PC-9 (cell line): ENCODE measurements at regions of chr1 and their contacts with region 1.

Region 1: GRCh38 chr1:31476891-31477828 is 64.1 kb downstream of the SERINC2 start:
- DNase-seq: peak; percentile 84 to 93
- H3K4me3 ChIP-seq: no peak overlapping the region
- H3K27ac ChIP-seq: peak overlapping the region; percentile 91
- H3K4me1 ChIP-seq: peaks cover 34% of the 10 kb centered on the region
- H3K27me3 ChIP-seq: no peaks in the 10 kb centered on the region
- CTCF ChIP-seq: no peak

Region 2: DNA sequence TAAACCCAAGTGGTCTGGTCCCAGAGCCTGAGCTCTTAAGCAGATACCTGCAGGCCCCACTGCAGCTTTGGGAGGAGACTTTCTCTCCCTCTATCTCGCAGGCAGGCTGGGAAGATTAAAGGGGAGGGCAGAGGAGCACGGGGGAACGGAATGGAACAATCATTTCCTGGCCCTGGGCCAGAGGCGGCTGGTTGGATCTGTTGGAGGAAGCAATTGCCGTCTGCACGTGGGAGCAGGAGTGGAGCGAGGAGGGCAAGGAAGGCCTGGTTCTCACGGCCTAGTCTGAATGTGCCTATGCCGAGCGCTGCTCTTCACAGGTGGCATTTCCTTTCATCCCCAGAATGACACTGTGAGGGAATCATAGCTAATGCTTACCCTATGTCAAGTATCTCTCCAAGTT is 261.1 kb before region 1 on chr1:
- CTCF ChIA-PET with region 1: no interaction called
- POLR2A ChIA-PET with region 1: no interaction called
- intact Hi-C with region 1: no loop called
- DNase-seq: no peak
- H3K4me3 ChIP-seq: no peak overlapping the region
- H3K27ac ChIP-seq: no peak overlapping the region
- H3K4me1 ChIP-seq: no peaks in the 10 kb centered on the region
- H3K27me3 ChIP-seq: no peaks in the 10 kb centered on the region
- CTCF ChIP-seq: no peak

Region 3: GRCh38 chr1:31509124-31510072 is 32.2 kb after region 1 on chr1:
- CTCF ChIA-PET with region 1: no interaction called
- POLR2A ChIA-PET with region 1: interaction called, 6 read pairs
- intact Hi-C with region 1: loop called (anchors 2 kb)
- DNase-seq: peak in 1 of 2 experiments; percentile 51
- H3K4me3 ChIP-seq: no peak overlapping the region
- H3K27ac ChIP-seq: no peak overlapping the region
- H3K4me1 ChIP-seq: peaks cover 34% of the 10 kb centered on the region
- H3K27me3 ChIP-seq: no peaks in the 10 kb centered on the region
- CTCF ChIP-seq: no peak

Region 4: DNA sequence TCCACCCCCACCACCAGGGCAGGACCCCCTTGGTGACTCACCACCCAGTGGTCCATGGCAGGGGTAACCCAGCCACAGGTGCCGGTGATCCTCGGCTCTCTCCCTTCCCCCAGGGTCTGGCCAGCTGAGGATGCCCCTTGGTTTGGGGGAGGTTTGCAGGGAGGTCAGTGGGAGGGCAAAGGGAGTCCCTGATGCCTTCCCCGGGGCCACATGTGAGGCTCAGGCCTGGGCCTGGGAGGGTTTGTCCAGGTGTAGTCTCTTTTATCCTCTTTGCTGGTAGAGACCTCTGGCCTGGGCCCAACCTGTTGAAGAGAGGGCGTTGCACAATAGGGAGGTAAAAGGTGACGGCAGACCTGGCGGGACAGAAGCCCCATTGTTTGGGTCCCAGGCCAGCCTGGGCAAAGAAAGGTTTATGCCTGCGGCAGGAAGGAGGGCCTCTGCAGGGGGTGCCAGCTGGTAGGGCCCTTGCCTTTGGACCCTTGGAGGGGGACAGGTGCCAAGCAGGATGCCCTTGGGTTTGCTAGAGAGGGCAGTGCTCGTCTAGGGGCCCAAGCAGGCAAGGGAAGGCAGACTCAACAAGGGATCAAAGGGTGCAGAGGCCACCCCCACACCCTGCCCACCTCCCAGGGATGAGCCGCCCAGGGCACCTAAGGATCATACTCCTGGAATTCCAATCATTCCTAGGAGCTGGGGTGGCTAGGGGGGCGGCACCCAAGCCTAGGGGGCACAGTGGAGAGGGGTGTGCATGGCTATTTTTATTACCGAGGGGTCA is 98.4 kb after region 1 on chr1:
- CTCF ChIA-PET with region 1: no interaction called
- POLR2A ChIA-PET with region 1: no interaction called
- intact Hi-C with region 1: no loop called
- DNase-seq: peak; percentile 91 to 100
- H3K4me3 ChIP-seq: peak overlapping the region; percentile 70
- H3K27ac ChIP-seq: peak overlapping the region; percentile 91
- H3K4me1 ChIP-seq: peaks cover 72% of the 10 kb centered on the region
- H3K27me3 ChIP-seq: no peaks in the 10 kb centered on the region
- CTCF ChIP-seq: no peak

Region 5: GRCh38 chr1:32448773-32449456 is 971.8 kb after region 1 on chr1:
- CTCF ChIA-PET with region 1: no interaction called
- POLR2A ChIA-PET with region 1: no interaction called
- intact Hi-C with region 1: no loop called
- DNase-seq: peak in 1 of 2 experiments; percentile 7
- H3K4me3 ChIP-seq: no peak overlapping the region
- H3K27ac ChIP-seq: no peak overlapping the region
- H3K4me1 ChIP-seq: no peaks in the 10 kb centered on the region
- H3K27me3 ChIP-seq: peaks cover 24% of the 10 kb centered on the region
- CTCF ChIP-seq: peak; percentile 45